ENCODE measurements at regions of chr11 and their contacts with region 1.

Region 1: GRCh38 chr11:101034076-101034475 is 95.5 kb downstream of the PGR start:
- DNase-seq: peak; percentile 78 to 86 (median 81)
- H3K4me3 ChIP-seq: no peak overlapping the region
- H3K27ac ChIP-seq: peak overlapping the region in 1 of 2 donors; percentile 74
- H3K4me1 ChIP-seq: peaks cover 7% of the 10 kb centered on the region
- H3K27me3 ChIP-seq: no peaks in the 10 kb centered on the region
- CTCF ChIP-seq: no peak
- EP300 ChIP-seq: no peak
- POLR2A ChIP-seq: no peak

Region 2: GRCh38 chr11:101096036-101096704 is 62.1 kb after region 1 on chr11:
- intact Hi-C with region 1: no loop called
- DNase-seq: peak in 4 of 5 donors; percentile 28 to 52 (median 41)
- H3K4me3 ChIP-seq: no peak overlapping the region
- H3K27ac ChIP-seq: no peak overlapping the region
- H3K4me1 ChIP-seq: peaks cover 9% of the 10 kb centered on the region
- H3K27me3 ChIP-seq: no peaks in the 10 kb centered on the region
- CTCF ChIP-seq: no peak
- EP300 ChIP-seq: no peak
- POLR2A ChIP-seq: no peak

Region 3: DNA sequence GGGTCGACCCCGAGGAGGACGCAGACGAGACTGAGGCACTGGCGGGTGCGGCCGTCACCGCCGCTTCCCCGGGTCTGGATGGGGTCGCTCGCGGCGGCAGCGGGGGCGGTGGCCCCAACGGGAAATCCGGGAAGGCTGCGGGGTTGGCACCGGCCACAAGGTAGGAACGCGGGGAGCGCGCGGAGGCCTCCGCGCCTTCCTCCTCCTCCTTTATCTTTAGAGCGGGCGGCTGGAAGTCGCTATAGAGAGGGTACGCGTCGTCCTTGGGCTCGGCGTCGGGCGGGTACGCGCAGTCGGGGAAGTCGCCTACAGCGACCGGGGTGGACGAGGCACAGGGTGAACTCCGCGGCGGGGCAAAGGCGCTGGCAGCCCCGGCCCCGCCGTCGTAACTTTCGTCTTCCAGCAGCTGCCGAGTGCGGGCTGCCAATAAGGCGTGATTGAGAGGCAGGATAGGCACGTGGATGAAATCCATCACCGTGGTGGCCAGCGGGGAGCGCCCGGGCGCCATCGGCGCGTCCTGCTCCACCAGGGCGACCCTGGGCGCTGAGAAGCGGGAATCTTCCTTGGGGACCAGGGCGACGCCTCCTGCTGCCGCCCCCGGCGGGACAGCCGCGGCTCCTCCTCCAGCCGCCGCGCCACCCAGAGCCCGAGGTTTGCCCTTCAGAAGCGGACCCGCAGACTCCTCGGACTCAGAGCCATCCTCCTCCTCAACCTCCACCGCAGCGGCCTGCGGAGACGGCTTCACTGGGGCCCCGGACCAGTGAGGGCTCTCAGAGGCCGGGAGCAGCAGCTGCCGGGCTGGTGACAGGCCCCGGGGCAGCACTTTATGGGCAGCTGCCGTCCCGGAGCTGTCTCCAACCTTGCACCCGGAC is 93.9 kb after region 1 on chr11:
- intact Hi-C with region 1: loop called in 1 of 4 experiments (anchors 5 kb)
- DNase-seq: peak; percentile 49 to 70 (median 69)
- H3K4me3 ChIP-seq: peak overlapping the region; percentile 74
- H3K27ac ChIP-seq: peak overlapping the region; percentile 90 to 93
- H3K4me1 ChIP-seq: peaks cover 2% of the 10 kb centered on the region
- H3K27me3 ChIP-seq: no peaks in the 10 kb centered on the region
- CTCF ChIP-seq: no peak
- EP300 ChIP-seq: no peak
- POLR2A ChIP-seq: no peak

Region 4: DNA sequence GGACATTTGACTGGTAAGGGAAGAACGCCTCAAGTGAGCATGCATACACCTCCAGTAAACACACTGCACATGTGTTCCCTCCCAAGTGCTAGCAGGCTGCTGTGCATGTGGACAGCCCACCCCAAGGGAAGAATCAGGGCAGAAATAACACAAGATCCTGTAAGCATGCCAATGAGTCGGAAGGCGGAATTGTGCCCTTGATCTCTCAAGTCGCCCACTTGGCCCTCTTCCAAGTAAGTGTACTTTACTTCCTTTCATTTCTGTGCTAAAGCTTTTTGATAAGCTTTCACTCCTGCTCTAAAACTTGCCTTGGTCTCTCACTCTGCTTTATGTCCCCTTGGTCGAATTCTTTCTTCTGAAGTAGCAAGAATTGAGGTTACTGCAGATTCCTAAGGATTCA is 410.1 kb after region 1 on chr11:
- intact Hi-C with region 1: no loop called
- DNase-seq: peak in 1 of 5 donors; percentile 41
- H3K4me3 ChIP-seq: no peak overlapping the region
- H3K27ac ChIP-seq: no peak overlapping the region
- H3K4me1 ChIP-seq: peaks cover 19% of the 10 kb centered on the region
- H3K27me3 ChIP-seq: no peaks in the 10 kb centered on the region
- CTCF ChIP-seq: no peak
- EP300 ChIP-seq: no peak
- POLR2A ChIP-seq: no peak

Measured in ovary (tissue), 10 donors.